ENCODE measurements at regions of chr3 and their contacts with region 1.

Region 1: DNA sequence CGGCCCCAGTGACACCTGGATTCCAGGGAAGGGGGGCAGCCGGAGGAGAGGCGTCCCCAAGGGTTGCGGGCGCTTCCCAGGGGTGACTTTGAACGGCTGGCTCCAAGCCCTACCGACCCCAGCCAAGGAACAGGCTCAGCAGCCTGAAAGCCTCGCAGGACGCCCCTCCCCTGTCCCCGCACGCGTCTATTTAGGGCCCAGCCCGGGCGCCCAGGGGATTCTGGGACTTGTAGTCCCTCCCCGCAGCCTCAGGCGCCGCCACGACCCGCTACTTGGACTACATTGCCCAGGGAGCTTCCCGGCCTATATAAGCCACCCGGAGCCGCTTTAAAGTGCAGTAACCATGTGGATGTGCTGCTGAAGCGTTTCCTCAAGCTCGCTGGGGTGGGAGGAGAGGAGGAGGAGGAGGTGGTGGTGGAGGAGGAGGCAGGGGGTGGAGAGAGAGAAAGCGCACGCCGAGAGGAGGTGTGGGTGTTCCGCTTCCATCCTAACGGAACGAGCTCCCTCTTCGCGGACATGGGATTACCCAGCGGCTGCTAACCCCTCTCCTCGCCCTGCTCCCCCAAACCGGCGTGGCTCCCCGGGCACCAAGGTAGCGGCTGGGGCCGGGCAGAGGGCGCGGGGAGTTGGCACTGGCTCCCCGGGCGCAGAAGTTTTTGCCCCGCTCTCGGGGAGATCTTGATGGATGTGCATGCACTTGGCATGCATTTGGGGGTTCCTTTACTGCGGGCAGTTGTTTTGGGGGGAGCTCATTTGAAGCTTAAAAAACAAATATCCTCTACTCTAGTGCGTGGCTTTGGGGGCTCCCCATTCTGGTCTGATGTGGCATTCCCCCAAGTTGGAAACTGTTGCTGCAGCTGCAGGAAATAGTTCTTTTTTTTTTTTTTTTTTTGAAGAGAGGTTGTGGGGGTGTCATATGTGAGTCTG is at the start of gene ITPR1:
- DNase-seq: peak; percentile 96 to 98
- H3K4me3 ChIP-seq: peak within 1 kb of the TSS; percentile 67
- H3K4me3 Mint-ChIP-seq: peak within 1 kb of the TSS; percentile 80
- H3K27ac Mint-ChIP-seq: peak within 1 kb of the TSS; percentile 79
- H3K4me1 ChIP-seq: peaks cover 4% of the 10 kb centered on the region; the same call in 1 of the 2 replicates
- H3K4me1 Mint-ChIP-seq: no peaks in the 10 kb centered on the region
- H3K27me3 ChIP-seq: no peaks in the 10 kb centered on the region; the same call in 1 of the 2 replicates
- H3K27me3 Mint-ChIP-seq: no peaks in the 10 kb centered on the region
- CTCF ChIP-seq: no peak
- total RNA-seq, gene ITPR1: 8.9 and 10.4 TPM in 2 replicates

Region 2: GRCh38 chr3:4350789-4351163 is 142.5 kb before region 1 on chr3:
- CTCF ChIA-PET with region 1: no interaction called
- POLR2A ChIA-PET with region 1: interaction called, 6 read pairs
- intact Hi-C with region 1: loop called (anchors 5 kb)
- DNase-seq: peak; percentile 43 to 55
- H3K4me3 ChIP-seq: no peak overlapping the region
- H3K4me3 Mint-ChIP-seq: peak overlapping the region; percentile 43
- H3K27ac Mint-ChIP-seq: peak overlapping the region; percentile 7
- H3K4me1 ChIP-seq: peaks cover 11% of the 10 kb centered on the region; the same call in 1 of the 2 replicates
- H3K4me1 Mint-ChIP-seq: peaks cover 20% of the 10 kb centered on the region
- H3K27me3 ChIP-seq: no peaks in the 10 kb centered on the region
- H3K27me3 Mint-ChIP-seq: no peaks in the 10 kb centered on the region
- CTCF ChIP-seq: peak; percentile 68 to 70

Region 3: DNA sequence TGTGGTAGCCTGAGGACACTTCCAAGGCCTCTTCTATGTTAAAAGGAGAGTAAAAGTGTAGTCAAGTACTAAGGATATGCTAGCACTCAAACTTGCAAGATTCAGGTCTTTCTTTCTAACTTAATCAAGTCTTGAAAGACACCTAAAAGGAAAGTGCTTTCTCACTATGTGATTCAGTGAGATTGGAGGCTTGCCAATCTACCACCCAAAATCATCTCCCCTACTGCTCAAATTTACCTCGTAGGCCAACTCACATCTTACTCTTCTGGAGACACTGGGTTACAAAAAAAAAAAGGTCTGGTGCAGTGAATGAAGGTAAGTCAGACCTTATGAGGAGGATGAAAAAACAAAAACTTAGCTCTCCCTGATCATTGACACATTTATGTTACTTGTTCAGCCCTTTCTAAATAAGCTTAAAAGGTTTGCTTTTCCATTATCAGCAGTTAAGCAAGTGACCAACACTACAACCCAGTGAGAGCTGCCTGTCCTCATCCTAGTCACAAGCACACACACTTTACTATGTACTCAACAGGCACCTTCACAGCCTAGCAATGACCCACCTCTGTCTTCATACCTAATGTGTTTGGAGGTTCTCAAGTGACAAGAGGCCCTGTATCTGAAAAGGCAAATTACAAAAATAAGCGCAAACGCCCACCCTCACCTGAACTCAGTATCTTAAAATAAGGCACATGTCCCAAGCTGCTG is 45.8 kb before region 1 on chr3:
- CTCF ChIA-PET with region 1: no interaction called
- POLR2A ChIA-PET with region 1: no interaction called
- intact Hi-C with region 1: no loop called
- DNase-seq: no peak
- H3K4me3 ChIP-seq: no peak overlapping the region
- H3K4me3 Mint-ChIP-seq: no peak overlapping the region
- H3K27ac Mint-ChIP-seq: no peak overlapping the region
- H3K4me1 ChIP-seq: no peaks in the 10 kb centered on the region
- H3K4me1 Mint-ChIP-seq: no peaks in the 10 kb centered on the region
- H3K27me3 ChIP-seq: no peaks in the 10 kb centered on the region
- H3K27me3 Mint-ChIP-seq: no peaks in the 10 kb centered on the region
- CTCF ChIP-seq: no peak

Region 4: GRCh38 chr3:4466741-4467521 is 26.3 kb before region 1 on chr3 and contains the start of gene SUMF1:
- CTCF ChIA-PET with region 1: no interaction called
- POLR2A ChIA-PET with region 1: interaction called, 28 read pairs
- intact Hi-C with region 1: loop called (anchors 1 kb)
- DNase-seq: peak; percentile 82 to 84
- H3K4me3 ChIP-seq: peak within 1 kb of the TSS; percentile 78
- H3K4me3 Mint-ChIP-seq: peak within 1 kb of the TSS; percentile 85
- H3K27ac Mint-ChIP-seq: peak within 1 kb of the TSS; percentile 93
- H3K4me1 ChIP-seq: peaks cover 7% of the 10 kb centered on the region
- H3K4me1 Mint-ChIP-seq: peaks cover 6% of the 10 kb centered on the region
- H3K27me3 ChIP-seq: no peaks in the 10 kb centered on the region
- H3K27me3 Mint-ChIP-seq: peaks cover under 1% of the 10 kb centered on the region
- CTCF ChIP-seq: no peak
- total RNA-seq, gene SUMF1: 22.9 and 24.4 TPM in 2 replicates

Region 5: DNA sequence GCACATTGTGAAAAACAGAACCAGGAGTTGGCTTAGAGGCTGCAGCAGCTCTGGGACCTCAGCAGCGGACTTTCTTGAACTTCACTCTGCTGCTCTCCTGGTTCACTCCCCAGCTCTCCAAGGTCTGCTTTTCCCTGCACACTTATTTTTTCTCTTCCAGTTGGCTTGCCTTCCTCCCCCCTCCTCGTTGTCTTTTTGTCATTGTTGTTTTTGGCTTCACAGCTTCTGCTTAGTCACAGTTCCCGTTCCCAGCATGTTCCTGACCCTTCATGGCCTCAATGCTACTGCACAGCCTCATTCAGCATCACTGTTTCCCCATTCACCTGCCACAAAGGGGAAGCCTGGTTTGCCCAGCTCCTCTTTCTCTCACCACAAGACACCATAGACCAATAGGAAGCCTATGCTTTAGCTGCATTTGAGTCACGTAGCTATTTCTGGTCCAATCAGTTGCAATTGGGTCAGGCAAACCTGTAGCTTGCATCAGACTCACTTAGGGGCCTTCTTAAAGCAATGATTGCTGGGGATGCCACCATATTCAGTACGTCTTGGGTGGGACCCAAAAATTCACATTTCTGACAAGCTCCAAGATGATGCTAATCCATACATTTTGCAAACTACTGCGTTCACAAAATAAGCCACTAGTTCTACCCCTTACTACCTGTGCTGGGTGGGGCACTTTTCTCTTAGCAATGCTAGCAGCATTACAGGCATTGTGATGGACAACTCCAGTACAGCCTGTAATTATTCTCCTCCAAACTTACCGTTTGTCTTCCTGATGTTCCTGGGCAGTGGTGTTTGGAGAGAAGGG is 18.4 kb before region 1 on chr3:
- CTCF ChIA-PET with region 1: no interaction called
- POLR2A ChIA-PET with region 1: interaction called, 14 read pairs
- intact Hi-C with region 1: no loop called
- DNase-seq: no peak
- H3K4me3 ChIP-seq: no peak overlapping the region
- H3K4me3 Mint-ChIP-seq: no peak overlapping the region
- H3K27ac Mint-ChIP-seq: no peak overlapping the region
- H3K4me1 ChIP-seq: no peaks in the 10 kb centered on the region
- H3K4me1 Mint-ChIP-seq: no peaks in the 10 kb centered on the region
- H3K27me3 ChIP-seq: no peaks in the 10 kb centered on the region
- H3K27me3 Mint-ChIP-seq: peaks cover 14% of the 10 kb centered on the region
- CTCF ChIP-seq: no peak

Region 6: DNA sequence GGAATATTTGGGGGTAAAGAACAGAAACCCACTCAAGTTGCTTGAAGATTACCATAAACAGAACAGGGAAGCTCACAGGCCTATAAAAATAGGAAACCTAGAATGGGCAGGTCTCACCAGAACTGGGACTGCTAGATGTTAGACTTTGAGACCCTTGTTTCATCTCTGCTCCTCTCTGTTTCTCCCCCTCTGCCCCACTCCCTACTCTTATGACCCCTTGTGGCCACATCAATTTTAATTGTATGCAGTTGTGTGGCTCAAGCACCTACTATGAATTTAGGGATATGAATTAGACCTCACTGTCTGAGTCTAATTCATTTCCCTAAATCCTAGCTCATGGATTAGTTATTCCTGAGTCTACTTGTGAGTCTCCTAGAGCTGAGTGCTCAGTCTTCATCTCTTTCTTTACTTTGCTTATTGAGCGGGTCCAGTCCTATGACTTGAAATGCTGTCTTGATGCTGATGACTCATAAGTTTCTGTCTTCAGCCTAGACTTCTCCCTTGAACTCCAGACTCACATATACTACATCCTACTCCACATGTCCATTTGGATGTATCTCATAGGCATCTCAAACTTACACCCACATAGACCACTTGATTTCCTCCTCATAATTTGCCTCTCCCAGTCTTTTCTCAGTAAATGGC is 78.5 kb after region 1 on chr3:
- CTCF ChIA-PET with region 1: no interaction called
- POLR2A ChIA-PET with region 1: no interaction called
- intact Hi-C with region 1: loop called (anchors 2 kb)
- DNase-seq: peak in 1 of 2 experiments; percentile 26
- H3K4me3 ChIP-seq: no peak overlapping the region
- H3K4me3 Mint-ChIP-seq: no peak overlapping the region
- H3K27ac Mint-ChIP-seq: no peak overlapping the region
- H3K4me1 ChIP-seq: no peaks in the 10 kb centered on the region
- H3K4me1 Mint-ChIP-seq: no peaks in the 10 kb centered on the region
- H3K27me3 ChIP-seq: no peaks in the 10 kb centered on the region
- H3K27me3 Mint-ChIP-seq: peaks cover 3% of the 10 kb centered on the region
- CTCF ChIP-seq: peak; percentile 16 to 33

Region 7: DNA sequence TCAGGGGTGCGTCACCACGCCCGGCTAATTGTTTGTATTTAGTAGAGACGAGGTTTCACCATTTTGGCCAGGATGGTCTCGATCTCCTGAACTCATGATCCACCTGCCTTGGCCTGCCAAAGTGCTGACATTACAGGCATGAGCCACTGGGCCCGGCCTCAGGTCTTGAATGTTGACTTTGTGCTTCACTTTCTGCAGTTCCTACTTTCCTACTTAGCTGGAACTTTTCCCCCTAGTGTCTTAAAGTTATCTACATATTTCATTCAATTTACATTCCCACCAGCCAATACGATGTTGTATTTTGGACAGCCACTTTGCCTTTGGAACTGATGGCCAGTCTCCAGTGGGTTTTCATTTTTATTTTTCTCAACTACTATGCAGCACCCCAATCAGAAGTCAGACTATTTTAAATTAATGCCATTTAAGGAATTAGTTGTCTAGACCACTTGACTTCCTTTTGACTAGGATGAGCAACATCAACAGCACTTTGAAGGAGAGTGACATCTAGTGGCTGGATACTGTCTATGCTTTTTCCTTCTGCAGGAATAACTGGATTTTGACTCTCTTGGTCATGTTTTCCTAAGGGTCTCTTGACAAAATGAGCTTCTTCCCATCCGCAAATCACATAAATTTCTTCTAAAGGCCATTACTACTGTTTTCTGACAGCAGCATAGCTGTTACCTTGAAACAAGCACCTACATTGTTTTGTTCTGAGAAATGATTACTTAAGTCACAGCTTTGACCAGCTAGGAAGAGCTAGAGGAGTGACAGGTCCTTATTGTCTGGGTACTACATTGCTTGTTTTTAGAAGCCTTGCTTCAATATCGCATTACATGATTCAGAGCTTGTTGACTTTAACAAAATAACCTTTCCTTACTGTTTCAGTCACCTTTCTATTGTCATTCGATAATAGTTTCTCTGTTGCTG is 140.1 kb after region 1 on chr3:
- CTCF ChIA-PET with region 1: no interaction called
- POLR2A ChIA-PET with region 1: no interaction called
- intact Hi-C with region 1: loop called (anchors 2 kb)
- DNase-seq: peak in 1 of 2 experiments; percentile 39
- H3K4me3 ChIP-seq: no peak overlapping the region
- H3K4me3 Mint-ChIP-seq: no peak overlapping the region
- H3K27ac Mint-ChIP-seq: no peak overlapping the region
- H3K4me1 ChIP-seq: no peaks in the 10 kb centered on the region
- H3K4me1 Mint-ChIP-seq: no peaks in the 10 kb centered on the region
- H3K27me3 ChIP-seq: no peaks in the 10 kb centered on the region
- H3K27me3 Mint-ChIP-seq: no peaks in the 10 kb centered on the region
- CTCF ChIP-seq: peak; percentile 76 to 86

Region 8: DNA sequence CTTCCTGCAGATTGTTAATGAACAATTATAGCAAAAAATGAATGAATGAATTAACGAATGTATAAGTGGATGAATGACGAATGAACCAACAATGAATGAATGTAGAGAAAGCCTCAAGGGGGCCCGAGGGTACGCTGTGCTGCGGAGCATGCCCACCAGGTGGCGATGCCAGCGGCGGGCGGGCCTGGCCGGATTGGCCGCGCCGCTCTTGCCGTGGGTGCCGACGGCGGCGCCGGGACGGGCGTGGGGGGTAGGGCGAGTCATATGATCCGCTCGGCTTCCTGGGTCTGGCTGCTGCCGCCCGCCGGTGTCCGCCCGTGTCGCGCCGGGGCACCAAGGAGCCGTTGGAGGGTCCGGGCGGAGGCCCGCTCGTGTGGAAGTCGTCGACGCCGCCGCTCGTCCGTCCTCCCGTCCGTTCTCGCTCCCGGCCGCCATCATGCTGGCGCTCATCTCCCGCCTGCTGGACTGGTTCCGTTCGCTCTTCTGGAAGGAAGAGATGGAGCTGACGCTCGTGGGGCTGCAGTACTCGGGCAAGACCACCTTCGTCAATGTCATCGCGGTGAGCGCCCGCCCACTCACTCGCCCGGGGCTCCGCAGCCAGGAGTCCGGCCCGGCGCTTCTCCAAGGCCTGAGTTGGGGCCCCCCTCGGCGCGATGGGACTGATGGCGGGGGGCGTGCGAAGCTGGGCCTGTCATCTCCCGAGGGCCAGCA is 628.9 kb after region 1 on chr3 and contains the start of gene ARL8B:
- CTCF ChIA-PET with region 1: no interaction called
- POLR2A ChIA-PET with region 1: no interaction called
- intact Hi-C with region 1: loop called (anchors 5 kb)
- DNase-seq: peak; percentile 87 to 94
- H3K4me3 ChIP-seq: peak within 1 kb of the TSS; percentile 99
- H3K4me3 Mint-ChIP-seq: peak within 1 kb of the TSS; percentile 84
- H3K27ac Mint-ChIP-seq: peak within 1 kb of the TSS; percentile 84
- H3K4me1 ChIP-seq: peaks cover 3% of the 10 kb centered on the region; the same call in 1 of the 2 replicates
- H3K4me1 Mint-ChIP-seq: peaks cover 14% of the 10 kb centered on the region
- H3K27me3 ChIP-seq: no peaks in the 10 kb centered on the region
- H3K27me3 Mint-ChIP-seq: no peaks in the 10 kb centered on the region
- CTCF ChIP-seq: peak; percentile 83 to 94
- total RNA-seq, gene ARL8B: 56.1 and 65.0 TPM in 2 replicates

Region 9: GRCh38 chr3:5136211-5136918 is 643.1 kb after region 1 on chr3:
- CTCF ChIA-PET with region 1: no interaction called
- POLR2A ChIA-PET with region 1: no interaction called
- intact Hi-C with region 1: no loop called
- DNase-seq: peak in 1 of 2 experiments; percentile 37
- H3K4me3 ChIP-seq: no peak overlapping the region
- H3K4me3 Mint-ChIP-seq: no peak overlapping the region
- H3K27ac Mint-ChIP-seq: no peak overlapping the region
- H3K4me1 ChIP-seq: peaks cover 19% of the 10 kb centered on the region
- H3K4me1 Mint-ChIP-seq: peaks cover 18% of the 10 kb centered on the region
- H3K27me3 ChIP-seq: no peaks in the 10 kb centered on the region
- H3K27me3 Mint-ChIP-seq: no peaks in the 10 kb centered on the region
- CTCF ChIP-seq: peak; percentile 18 to 62